Thyroid gland (tissue), 4 donors: ENCODE measurements at regions of chr16 and their contacts with region 1.

Region 1: GRCh38 chr16:56317998-56318826 is 107.1 kb downstream of the AMFR start:
- DNase-seq: peak; percentile 76 to 87
- H3K4me3 ChIP-seq: no peak overlapping the region
- H3K27ac ChIP-seq: no peak overlapping the region
- H3K4me1 ChIP-seq: peaks cover 3 to 6% of the 10 kb centered on the region in 2 donors
- H3K27me3 ChIP-seq: no peaks in the 10 kb centered on the region
- CTCF ChIP-seq: peak; percentile 87 to 98 (median 94)
- POLR2A ChIP-seq: no peak

Region 2: DNA sequence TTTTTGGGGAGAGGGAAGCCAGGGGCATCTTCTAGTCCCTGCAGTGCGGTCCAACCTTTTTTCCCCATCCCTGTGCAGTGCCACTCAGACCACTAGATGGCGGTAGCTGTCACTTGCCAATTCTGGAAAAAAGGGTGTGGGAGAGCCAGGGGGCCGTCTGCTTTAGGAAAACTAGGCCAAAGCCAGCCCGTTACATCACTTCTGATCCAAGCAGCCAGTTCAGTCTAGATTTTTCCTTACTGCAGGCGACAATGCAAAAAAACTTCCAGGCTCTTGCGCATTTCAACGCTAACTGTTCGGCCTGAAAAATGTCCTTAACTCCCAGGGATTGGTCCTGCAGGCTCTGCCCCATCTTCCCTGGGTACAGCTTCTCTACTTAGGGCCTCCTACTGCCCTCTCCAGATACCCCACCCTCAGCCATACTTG is 373.8 kb before region 1 on chr16:
- intact Hi-C with region 1: loop called (anchors 2 kb)
- DNase-seq: peak; percentile 58 to 65
- H3K4me3 ChIP-seq: no peak overlapping the region
- H3K27ac ChIP-seq: no peak overlapping the region
- H3K4me1 ChIP-seq: no peaks in the 10 kb centered on the region
- H3K27me3 ChIP-seq: no peaks in the 10 kb centered on the region
- CTCF ChIP-seq: peak; percentile 72 to 92 (median 82)
- POLR2A ChIP-seq: no peak

Region 3: DNA sequence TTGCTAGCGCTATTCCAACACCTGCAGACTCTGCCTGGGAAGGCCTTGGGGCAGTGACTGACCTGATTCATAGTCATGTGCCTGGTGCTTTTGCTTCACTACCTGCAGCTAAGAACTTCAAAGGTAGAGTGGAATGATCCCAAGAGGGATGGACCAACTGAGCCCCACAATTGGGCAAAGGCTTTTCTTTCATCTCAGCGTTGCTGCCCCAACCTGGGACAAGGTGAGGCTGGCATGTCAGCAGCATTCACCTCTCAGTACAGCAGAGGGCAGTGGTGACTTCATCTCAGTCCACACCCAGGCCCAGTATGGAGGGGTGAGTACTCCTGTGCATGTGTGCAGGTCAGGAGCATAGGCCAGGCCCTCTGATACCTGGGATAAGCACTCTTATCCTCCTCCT is 276.5 kb before region 1 on chr16:
- intact Hi-C with region 1: loop called (anchors 2 kb)
- DNase-seq: peak; percentile 47 to 51
- H3K4me3 ChIP-seq: no peak overlapping the region
- H3K27ac ChIP-seq: no peak overlapping the region
- H3K4me1 ChIP-seq: no peaks in the 10 kb centered on the region
- H3K27me3 ChIP-seq: no peaks in the 10 kb centered on the region
- CTCF ChIP-seq: peak in 3 of 6 experiments; percentile 49 to 55 (median 50)
- POLR2A ChIP-seq: no peak